ENCODE measurements at regions of chr11 and their contacts with region 1.

Region 1: DNA sequence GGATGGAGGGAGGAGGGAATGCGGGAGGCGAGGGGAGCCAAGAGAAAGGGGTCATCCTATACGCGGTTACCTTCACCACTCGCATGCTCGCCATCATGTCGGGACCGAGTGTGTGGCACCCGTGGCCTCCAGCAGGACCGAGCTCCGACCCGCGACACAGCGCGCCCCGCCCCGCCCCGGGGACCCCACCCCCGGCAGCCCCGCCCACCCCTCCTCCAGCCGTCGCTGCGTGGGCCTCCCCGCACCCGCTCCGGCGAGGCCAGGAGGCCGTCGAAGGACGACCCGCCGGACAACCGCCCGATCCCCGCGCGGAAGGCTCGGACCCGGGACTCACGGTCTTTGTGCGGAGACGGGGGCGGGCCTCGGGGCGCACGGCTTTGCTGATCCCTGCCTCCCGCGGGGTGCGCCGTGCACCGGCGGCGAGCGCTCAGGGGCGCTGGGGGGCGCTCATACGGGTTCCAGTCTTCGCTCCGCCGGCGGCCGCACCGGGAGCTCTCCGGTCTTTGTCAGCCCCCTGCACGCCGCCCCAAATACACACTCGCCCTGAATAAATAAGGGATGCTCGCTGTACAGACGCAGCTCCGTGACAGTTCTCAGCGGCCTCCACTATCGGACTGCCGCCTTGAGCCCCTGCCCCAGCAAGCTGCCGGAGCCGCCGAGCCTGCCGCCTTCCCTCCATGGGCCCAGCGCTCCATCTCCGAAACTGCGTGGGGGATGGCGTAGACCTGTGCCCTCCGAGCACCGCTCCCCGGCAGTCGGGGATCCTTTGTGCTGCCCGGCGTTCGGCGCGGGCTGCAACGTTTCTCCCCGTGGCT is at the start of gene UBE2L6:
- DNase-seq: no peak
- H3K4me3 ChIP-seq: peak within 1 kb of the TSS; percentile 96
- H3K27ac ChIP-seq: peak within 1 kb of the TSS; percentile 75
- H3K27me3 ChIP-seq: no peaks in the 10 kb centered on the region
- CTCF ChIP-seq: no peak
- polyA plus RNA-seq, gene UBE2L6: 63.8 and 76.8 TPM in 2 replicates

Region 2: GRCh38 chr11:57597916-57598830 is 30.5 kb after region 1 on chr11:
- CTCF ChIA-PET with region 1: interaction called, 16 read pairs
- POLR2A ChIA-PET with region 1: no interaction called
- DNase-seq: no peak
- H3K4me3 ChIP-seq: peak overlapping the region; percentile 57
- H3K27ac ChIP-seq: no peak overlapping the region
- H3K27me3 ChIP-seq: peaks cover 18% of the 10 kb centered on the region
- CTCF ChIP-seq: no peak

Region 3: GRCh38 chr11:57638005-57638781 is 70.5 kb after region 1 on chr11:
- CTCF ChIA-PET with region 1: interaction called, 227 read pairs
- POLR2A ChIA-PET with region 1: interaction called, 11 read pairs
- DNase-seq: peak; percentile 58
- H3K4me3 ChIP-seq: peak overlapping the region; percentile 99
- H3K27ac ChIP-seq: peak overlapping the region; percentile 73
- H3K27me3 ChIP-seq: peaks cover 4% of the 10 kb centered on the region
- CTCF ChIP-seq: no peak

Measured in AG04450 (cell line).